ENCODE measurements at regions of chr5 and their contacts with region 1.

Region 1: GRCh38 chr5:139341650-139342422 is at the start of gene PAIP2:
- H3K4me3 ChIP-seq: peak within 1 kb of the TSS; percentile 97
- H3K27ac ChIP-seq: peak within 1 kb of the TSS; percentile 97
- H3K4me1 ChIP-seq: peaks cover 11% of the 10 kb centered on the region
- CTCF ChIP-seq: peak; percentile 100

Region 2: DNA sequence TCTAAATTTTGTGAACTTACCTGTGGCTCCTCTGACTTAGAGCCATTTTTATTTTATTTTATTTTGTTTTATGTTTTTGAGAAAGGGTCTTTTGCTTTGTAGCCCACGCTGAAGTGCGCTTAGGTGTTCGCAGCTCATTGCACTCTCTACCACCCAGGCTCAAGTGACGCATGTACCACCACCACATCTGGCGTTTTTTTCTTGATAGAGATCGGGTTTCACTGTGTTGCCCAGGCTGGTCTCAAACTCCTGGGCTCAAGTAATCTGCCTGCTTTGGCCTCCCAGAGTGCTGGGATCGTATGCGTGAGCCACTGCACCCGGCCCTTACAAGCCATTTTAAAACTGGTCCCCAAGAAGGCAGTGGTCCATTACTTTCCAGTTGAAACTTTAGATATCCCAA is 29.8 kb before region 1 on chr5:
- CTCF ChIA-PET with region 1: interaction called, 4 read pairs
- POLR2A ChIA-PET with region 1: interaction called, 17 read pairs
- H3K4me3 ChIP-seq: no peak overlapping the region
- H3K27ac ChIP-seq: no peak overlapping the region
- H3K4me1 ChIP-seq: peaks cover 51% of the 10 kb centered on the region
- CTCF ChIP-seq: no peak

Region 3: GRCh38 chr5:139361835-139362429 is 20.1 kb after region 1 on chr5:
- CTCF ChIA-PET with region 1: interaction called, 3 read pairs
- POLR2A ChIA-PET with region 1: interaction called, 10 read pairs
- H3K4me3 ChIP-seq: no peak overlapping the region
- H3K27ac ChIP-seq: no peak overlapping the region
- H3K4me1 ChIP-seq: no peaks in the 10 kb centered on the region
- CTCF ChIP-seq: no peak

Region 4: GRCh38 chr5:139593716-139594319 is 252.0 kb after region 1 on chr5:
- CTCF ChIA-PET with region 1: no interaction called
- POLR2A ChIA-PET with region 1: no interaction called
- H3K4me3 ChIP-seq: no peak overlapping the region
- H3K27ac ChIP-seq: no peak overlapping the region
- H3K4me1 ChIP-seq: no peaks in the 10 kb centered on the region
- CTCF ChIP-seq: no peak